Common myeloid progenitor, CD34-positive (primary cell): ENCODE measurements at regions of chr2 and their contacts with region 1.

Region 1: GRCh38 chr2:66445925-66446860 is 11.3 kb downstream of the MEIS1 start:
- DNase-seq: peak in 2 of 3 donors; percentile 66 to 77
- H3K4me3 ChIP-seq: peak overlapping the region in 6 of 7 experiments; percentile 57 to 97 (median 66)
- H3K27ac ChIP-seq: peak overlapping the region; percentile 83 to 92
- H3K4me1 ChIP-seq: peaks cover 25 to 94% (median 62%) of the 10 kb centered on the region in 4 experiments
- H3K27me3 ChIP-seq: no peaks in the 10 kb centered on the region

Region 2: DNA sequence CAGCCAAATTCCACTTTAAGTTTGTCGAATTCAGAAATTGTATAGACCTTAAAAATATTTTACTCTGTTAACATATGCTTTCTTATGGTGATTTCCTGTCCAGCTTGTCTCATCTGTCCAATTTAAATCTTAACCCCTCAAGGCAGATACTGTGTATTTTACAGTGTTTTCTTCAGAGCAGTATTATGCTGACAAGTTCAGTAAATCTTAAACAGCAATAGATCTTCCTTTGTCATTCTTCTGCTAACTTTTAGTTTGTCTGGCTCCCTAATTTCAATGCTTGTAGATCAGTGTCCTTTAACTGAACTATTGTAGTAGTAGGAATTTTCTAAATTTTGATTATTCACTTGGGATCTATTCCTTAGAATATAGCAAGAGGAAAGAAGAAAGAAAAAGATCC is 64.1 kb before region 1 on chr2:
- CTCF ChIA-PET with region 1: no interaction called
- POLR2A ChIA-PET with region 1: no interaction called
- DNase-seq: no peak
- H3K4me3 ChIP-seq: no peak overlapping the region
- H3K27ac ChIP-seq: no peak overlapping the region
- H3K4me1 ChIP-seq: no peaks in the 10 kb centered on the region
- H3K27me3 ChIP-seq: no peaks in the 10 kb centered on the region

Region 3: GRCh38 chr2:66408905-66409304 is 37.3 kb before region 1 on chr2:
- CTCF ChIA-PET with region 1: no interaction called
- POLR2A ChIA-PET with region 1: no interaction called
- DNase-seq: no peak
- H3K4me3 ChIP-seq: no peak overlapping the region
- H3K27ac ChIP-seq: no peak overlapping the region
- H3K4me1 ChIP-seq: no peaks in the 10 kb centered on the region
- H3K27me3 ChIP-seq: no peaks in the 10 kb centered on the region

Region 4: GRCh38 chr2:66434679-66435548 is 11.3 kb before region 1 on chr2 and contains the start of gene MEIS1:
- CTCF ChIA-PET with region 1: interaction called, 67 read pairs
- POLR2A ChIA-PET with region 1: interaction called, 28 read pairs
- DNase-seq: peak; percentile 99 to 100 (median 99)
- H3K4me3 ChIP-seq: peak within 1 kb of the TSS; percentile 73 to 97 (median 92)
- H3K27ac ChIP-seq: peak within 1 kb of the TSS; percentile 78 to 90
- H3K4me1 ChIP-seq: peaks cover 12 to 64% (median 29%) of the 10 kb centered on the region in 4 experiments
- H3K27me3 ChIP-seq: no peaks in the 10 kb centered on the region

Region 5: DNA sequence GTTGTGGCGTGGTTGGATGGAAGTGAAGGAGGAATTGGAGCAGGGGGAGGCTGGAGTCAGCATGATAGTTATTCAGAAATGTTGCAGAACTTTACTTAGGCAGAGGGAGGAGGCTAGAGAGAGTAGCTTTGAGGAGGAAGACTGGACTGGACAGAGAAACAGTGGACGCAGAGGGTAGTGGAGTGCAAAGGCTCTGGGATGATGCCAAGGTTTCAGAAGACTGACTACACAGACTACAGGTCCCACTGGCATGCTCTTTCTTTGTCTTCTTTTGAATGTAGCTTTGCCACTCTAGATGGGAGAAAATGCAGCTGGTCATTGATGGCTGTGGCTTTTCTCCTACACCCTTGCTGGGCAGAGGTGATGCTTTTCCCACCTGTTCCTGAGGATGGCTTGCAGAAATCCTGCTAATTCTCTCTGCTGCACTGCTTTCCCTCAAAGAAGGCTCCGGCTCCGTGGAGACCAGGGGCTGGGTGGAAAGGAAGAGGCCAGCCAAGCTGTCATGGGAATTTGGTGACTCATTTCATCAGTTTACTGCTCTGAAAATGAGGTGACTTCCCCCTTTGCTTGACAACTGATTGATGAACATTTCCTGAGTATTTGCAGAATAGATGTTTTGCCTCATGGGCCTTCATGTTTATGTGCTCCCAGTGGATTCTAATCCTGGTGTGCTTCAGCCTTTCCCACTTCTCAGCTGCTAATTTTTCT is 31.1 kb after region 1 on chr2:
- CTCF ChIA-PET with region 1: interaction called, 17 read pairs
- POLR2A ChIA-PET with region 1: interaction called, 4 read pairs
- DNase-seq: peak; percentile 35 to 78 (median 63)
- H3K4me3 ChIP-seq: peak overlapping the region in 3 of 7 experiments; percentile 19 to 37 (median 31)
- H3K27ac ChIP-seq: peak overlapping the region; percentile 51 to 71
- H3K4me1 ChIP-seq: peaks cover 14 to 76% (median 64%) of the 10 kb centered on the region in 4 experiments
- H3K27me3 ChIP-seq: no peaks in the 10 kb centered on the region

Region 6: GRCh38 chr2:66569321-66569851 is 123.2 kb after region 1 on chr2:
- CTCF ChIA-PET with region 1: interaction called, 185 read pairs
- POLR2A ChIA-PET with region 1: interaction called, 16 read pairs
- DNase-seq: peak; percentile 92 to 99 (median 98)
- H3K4me3 ChIP-seq: peak overlapping the region in 2 of 7 experiments; percentile 11 to 49
- H3K27ac ChIP-seq: peak overlapping the region; percentile 74 to 84
- H3K4me1 ChIP-seq: peaks cover 19 to 70% (median 46%) of the 10 kb centered on the region in 4 experiments
- H3K27me3 ChIP-seq: no peaks in the 10 kb centered on the region